Caco-2 (cell line): ENCODE measurements at regions of chr18 and their contacts with region 1.

Region 1: GRCh38 chr18:21191596-21192307 is 50.3 kb upstream of the GREB1L start:
- DNase-seq: peak; percentile 75 to 77
- H3K4me3 ChIP-seq: no peak overlapping the region
- H3K4me3 Mint-ChIP-seq: no peak overlapping the region
- H3K27ac Mint-ChIP-seq: no peak overlapping the region
- H3K4me1 ChIP-seq: no peaks in the 10 kb centered on the region
- H3K4me1 Mint-ChIP-seq: peaks cover 13% of the 10 kb centered on the region
- H3K27me3 ChIP-seq: no peaks in the 10 kb centered on the region
- H3K27me3 Mint-ChIP-seq: no peaks in the 10 kb centered on the region
- CTCF ChIP-seq: peak; percentile 83 to 85

Region 2: GRCh38 chr18:20971886-20972267 is 219.9 kb before region 1 on chr18:
- CTCF ChIA-PET with region 1: no interaction called
- POLR2A ChIA-PET with region 1: no interaction called
- intact Hi-C with region 1: loop called (anchors 1 kb)
- DNase-seq: peak in 1 of 2 experiments; percentile 55
- H3K4me3 ChIP-seq: no peak overlapping the region
- H3K4me3 Mint-ChIP-seq: no peak overlapping the region
- H3K27ac Mint-ChIP-seq: no peak overlapping the region
- H3K4me1 ChIP-seq: no peaks in the 10 kb centered on the region
- H3K4me1 Mint-ChIP-seq: peaks cover 6% of the 10 kb centered on the region
- H3K27me3 ChIP-seq: no peaks in the 10 kb centered on the region
- H3K27me3 Mint-ChIP-seq: no peaks in the 10 kb centered on the region
- CTCF ChIP-seq: peak; percentile 45 to 52

Region 3: GRCh38 chr18:21242141-21242779 is 50.5 kb after region 1 on chr18 and contains the start of gene GREB1L:
- CTCF ChIA-PET with region 1: no interaction called
- POLR2A ChIA-PET with region 1: interaction called, 4 read pairs
- intact Hi-C with region 1: loop called (anchors 10 kb)
- DNase-seq: peak; percentile 82 to 91
- H3K4me3 ChIP-seq: peak within 1 kb of the TSS; percentile 99
- H3K4me3 Mint-ChIP-seq: peak within 1 kb of the TSS; percentile 95
- H3K27ac Mint-ChIP-seq: peak within 1 kb of the TSS; percentile 91
- H3K4me1 ChIP-seq: peaks cover 25% of the 10 kb centered on the region; the same call in 1 of the 2 replicates
- H3K4me1 Mint-ChIP-seq: peaks cover 18% of the 10 kb centered on the region
- H3K27me3 ChIP-seq: no peaks in the 10 kb centered on the region
- H3K27me3 Mint-ChIP-seq: no peaks in the 10 kb centered on the region
- CTCF ChIP-seq: peak; percentile 28 to 35
- total RNA-seq, gene GREB1L: 71.1 and 75.4 TPM in 2 replicates

Region 4: DNA sequence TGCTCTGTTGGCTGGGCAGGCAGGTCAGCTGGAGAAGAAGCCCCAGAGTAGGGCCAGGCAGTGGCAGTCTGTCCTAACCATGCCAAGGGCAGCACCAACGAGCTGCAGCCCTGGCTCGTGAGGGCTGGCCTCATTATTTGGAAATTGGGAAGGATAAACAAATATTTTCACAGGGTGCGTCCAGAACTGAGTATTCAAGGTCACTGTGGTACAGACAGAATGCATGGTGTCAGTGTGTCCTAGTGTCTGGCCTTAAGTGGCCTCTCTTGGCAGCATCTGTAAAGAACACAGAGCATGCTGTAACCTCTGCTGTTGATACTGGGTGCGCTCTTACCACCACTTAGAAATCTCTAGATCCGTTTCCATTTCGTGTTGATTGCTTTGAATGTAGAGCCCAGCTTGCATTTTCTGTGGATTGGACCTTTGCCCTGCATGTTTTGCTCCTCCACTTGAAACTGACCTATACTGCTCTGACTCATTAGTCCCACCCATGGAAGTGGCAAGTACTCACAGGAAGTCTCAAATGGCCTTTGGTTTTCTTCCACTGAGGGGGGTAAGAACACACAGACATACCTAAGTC is 138.5 kb after region 1 on chr18:
- CTCF ChIA-PET with region 1: no interaction called
- POLR2A ChIA-PET with region 1: no interaction called
- intact Hi-C with region 1: loop called (anchors 5 kb)
- DNase-seq: peak; percentile 45 to 63
- H3K4me3 ChIP-seq: no peak overlapping the region
- H3K4me3 Mint-ChIP-seq: peak overlapping the region; percentile 53
- H3K27ac Mint-ChIP-seq: peak overlapping the region; percentile 69
- H3K4me1 ChIP-seq: peaks cover 46% of the 10 kb centered on the region
- H3K4me1 Mint-ChIP-seq: peaks cover 42% of the 10 kb centered on the region
- H3K27me3 ChIP-seq: no peaks in the 10 kb centered on the region
- H3K27me3 Mint-ChIP-seq: no peaks in the 10 kb centered on the region
- CTCF ChIP-seq: no peak

Region 5: DNA sequence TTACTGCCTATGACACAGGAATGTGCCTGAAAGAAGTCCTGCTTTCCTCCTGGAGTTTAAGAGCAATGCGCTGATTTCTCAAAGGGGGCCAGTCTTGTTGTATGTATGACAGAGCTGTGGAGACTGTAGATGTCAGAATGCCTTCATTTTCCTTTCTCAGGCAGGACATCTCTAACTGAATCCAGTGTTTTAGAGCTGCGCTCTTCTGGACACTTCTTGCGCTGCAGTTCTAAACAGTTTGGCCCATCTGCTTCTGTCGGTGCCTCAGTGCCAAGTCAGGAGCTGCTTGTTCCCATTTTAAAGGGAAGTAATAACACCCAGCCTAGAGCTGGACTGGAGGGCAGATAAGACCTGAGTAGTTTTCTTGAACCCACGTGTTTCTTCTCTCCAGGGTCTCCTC is 317.3 kb after region 1 on chr18:
- CTCF ChIA-PET with region 1: no interaction called
- POLR2A ChIA-PET with region 1: no interaction called
- intact Hi-C with region 1: loop called (anchors 2 kb)
- DNase-seq: no peak
- H3K4me3 ChIP-seq: no peak overlapping the region
- H3K4me3 Mint-ChIP-seq: no peak overlapping the region
- H3K27ac Mint-ChIP-seq: no peak overlapping the region
- H3K4me1 ChIP-seq: no peaks in the 10 kb centered on the region
- H3K4me1 Mint-ChIP-seq: no peaks in the 10 kb centered on the region
- H3K27me3 ChIP-seq: no peaks in the 10 kb centered on the region
- H3K27me3 Mint-ChIP-seq: no peaks in the 10 kb centered on the region
- CTCF ChIP-seq: no peak